Calu3 (cell line): ENCODE measurements at regions of chr6 and their contacts with region 1.

Region 1: GRCh38 chr6:87799651-87800050 is 97.6 kb upstream of the AKIRIN2 start:
- DNase-seq: no peak
- H3K4me3 Mint-ChIP-seq: no peak overlapping the region
- H3K27ac Mint-ChIP-seq: no peak overlapping the region
- H3K4me1 Mint-ChIP-seq: no peaks in the 10 kb centered on the region
- H3K27me3 Mint-ChIP-seq: no peaks in the 10 kb centered on the region
- CTCF ChIP-seq: no peak

Region 2: GRCh38 chr6:87697581-87698552 is 101.8 kb before region 1 on chr6:
- CTCF ChIA-PET with region 1: no interaction called
- intact Hi-C with region 1: loop called (anchors 10 kb)
- DNase-seq: no peak
- H3K4me3 Mint-ChIP-seq: peak overlapping the region; percentile 96
- H3K27ac Mint-ChIP-seq: no peak overlapping the region
- H3K4me1 Mint-ChIP-seq: peaks cover 17% of the 10 kb centered on the region
- H3K27me3 Mint-ChIP-seq: no peaks in the 10 kb centered on the region
- CTCF ChIP-seq: no peak